Dendritic cell treated with granulocyte-macrophage colony-stimulating factor and Interleukin-4, amounts not matched to agents 40 ng/mL and 50 ng/mL, for 4 days (primary cell): ENCODE measurements at regions of chr7 and their contacts with region 1.

Region 1: GRCh38 chr7:91880413-91881241 is at the start of gene MTERF1:
- H3K4me3 Mint-ChIP-seq: peak within 1 kb of the TSS; percentile 93
- H3K27ac Mint-ChIP-seq: peak within 1 kb of the TSS; percentile 79
- H3K4me1 Mint-ChIP-seq: peaks cover 20% of the 10 kb centered on the region
- H3K27me3 Mint-ChIP-seq: peaks cover 2% of the 10 kb centered on the region

Region 2: DNA sequence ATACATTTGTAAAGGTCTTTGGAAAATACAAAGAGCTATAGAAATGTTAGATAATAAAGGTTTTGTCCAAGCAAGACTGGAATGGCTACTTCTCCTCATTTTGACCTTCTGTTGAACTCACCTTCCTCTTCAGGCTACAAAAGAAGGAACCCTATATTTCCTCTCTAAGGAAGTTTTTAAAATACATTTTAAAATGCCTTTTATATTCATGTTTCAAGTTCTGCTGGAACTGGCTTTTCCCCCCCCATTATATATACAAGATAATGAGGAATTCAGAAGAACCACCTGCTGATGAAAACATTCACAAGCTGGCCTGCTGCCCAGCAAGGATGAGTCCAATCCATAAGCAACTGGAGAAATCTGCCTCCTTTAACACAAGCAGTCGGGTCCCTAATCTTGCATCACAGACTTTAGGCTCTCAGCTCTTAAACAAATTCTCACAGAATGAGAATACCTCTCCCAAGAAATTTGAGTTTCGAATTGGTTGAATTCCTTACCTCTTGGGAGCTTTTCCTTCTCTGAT is 44.7 kb before region 1 on chr7:
- intact Hi-C with region 1: loop called (anchors 2 kb)
- H3K4me3 Mint-ChIP-seq: no peak overlapping the region
- H3K27ac Mint-ChIP-seq: no peak overlapping the region
- H3K4me1 Mint-ChIP-seq: peaks cover 12% of the 10 kb centered on the region
- H3K27me3 Mint-ChIP-seq: no peaks in the 10 kb centered on the region

Region 3: DNA sequence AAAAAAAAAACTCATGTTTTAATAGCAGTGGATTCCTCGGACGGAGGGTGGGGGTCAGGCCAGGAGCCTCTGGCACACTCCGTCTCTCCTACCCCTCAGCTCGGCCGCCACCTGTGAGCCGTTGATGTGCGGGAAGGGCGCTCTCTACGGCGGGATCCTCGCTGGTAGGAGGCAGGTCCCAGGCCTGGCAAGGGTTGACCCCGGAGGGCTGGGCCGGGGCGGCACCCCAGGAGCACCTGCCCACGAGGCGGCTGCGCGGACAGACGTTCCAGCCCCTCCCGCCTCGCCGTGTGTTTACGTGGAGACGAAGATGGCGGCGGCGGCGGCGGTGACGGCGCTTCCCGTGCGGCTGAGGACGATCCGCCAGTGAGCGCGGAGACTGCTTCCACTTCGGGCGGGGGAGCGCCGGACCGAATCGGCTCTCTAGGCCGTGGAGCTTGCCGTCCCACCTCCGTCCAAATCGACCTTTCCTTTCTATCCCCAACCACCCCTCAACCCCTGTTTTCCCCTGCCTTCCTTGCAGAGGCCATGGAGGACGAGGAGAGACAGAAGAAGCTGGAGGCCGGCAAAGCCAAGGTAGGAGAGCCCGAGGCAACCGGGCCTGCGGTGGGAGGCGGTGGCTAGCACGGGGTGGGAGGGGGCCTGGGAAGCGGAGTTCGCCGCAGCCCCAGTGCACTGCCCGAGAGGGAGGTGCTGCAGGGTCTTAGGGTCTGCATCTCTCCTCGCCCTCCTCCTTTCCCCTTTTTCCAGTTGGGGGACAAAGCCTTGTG is 60.1 kb after region 1 on chr7 and contains the start of gene AKAP9:
- intact Hi-C with region 1: loop called (anchors 1 kb)
- H3K4me3 Mint-ChIP-seq: peak within 1 kb of the TSS; percentile 98
- H3K27ac Mint-ChIP-seq: peak within 1 kb of the TSS; percentile 97
- H3K4me1 Mint-ChIP-seq: peaks cover 35% of the 10 kb centered on the region
- H3K27me3 Mint-ChIP-seq: peaks cover 2% of the 10 kb centered on the region